ENCODE measurements at regions of chr15 and their contacts with region 1.

Region 1: DNA sequence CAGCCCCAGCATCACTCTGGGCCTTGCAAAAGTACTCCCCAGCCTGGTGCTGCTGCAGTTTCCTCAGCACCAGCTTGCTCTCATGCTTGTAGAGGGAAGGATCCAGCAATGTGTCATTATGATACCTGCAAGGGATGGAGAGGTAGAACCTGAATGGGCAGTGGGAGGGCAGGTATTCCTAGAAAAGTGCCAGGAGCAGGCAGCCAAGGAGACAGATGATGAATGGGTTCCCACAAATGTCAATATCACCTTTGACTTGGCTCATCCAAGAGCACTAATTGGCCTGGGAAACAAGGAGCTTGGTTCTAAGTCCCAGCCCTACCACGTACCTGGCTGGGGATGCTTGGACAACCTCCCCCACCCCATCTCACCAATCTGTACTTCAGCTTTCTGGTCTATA is 9.4 kb downstream of the CILP start:
- DNase-seq: no peak
- H3K4me3 Mint-ChIP-seq: no peak overlapping the region
- H3K27ac Mint-ChIP-seq: no peak overlapping the region
- H3K4me1 Mint-ChIP-seq: no peaks in the 10 kb centered on the region
- H3K27me3 Mint-ChIP-seq: peaks cover 26% of the 10 kb centered on the region

Region 2: DNA sequence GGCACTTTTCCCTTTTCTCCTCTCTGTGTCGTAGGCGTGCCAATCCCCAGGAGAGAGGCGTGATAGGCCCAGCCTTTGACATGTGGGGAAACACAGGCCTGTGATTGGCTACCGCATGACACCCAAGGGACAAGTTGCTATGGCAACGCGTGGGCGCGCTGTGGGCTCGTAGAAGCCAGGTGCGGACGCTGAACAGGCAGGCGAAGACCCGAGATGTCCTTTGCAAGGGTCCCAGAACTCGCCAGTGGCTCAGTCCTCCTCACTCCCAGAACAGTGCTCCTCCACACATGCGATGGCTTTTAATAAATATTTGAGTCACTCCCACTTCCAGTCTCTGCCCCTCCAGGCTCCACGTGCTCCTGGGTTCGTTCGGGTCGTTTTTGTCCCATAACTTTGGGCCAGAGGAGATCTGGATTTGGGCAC is 152.5 kb before region 1 on chr15:
- CTCF ChIA-PET with region 1: no interaction called
- DNase-seq: peak; percentile 92
- H3K4me3 Mint-ChIP-seq: peak overlapping the region; percentile 44
- H3K27ac Mint-ChIP-seq: no peak overlapping the region
- H3K4me1 Mint-ChIP-seq: peaks cover 13% of the 10 kb centered on the region
- H3K27me3 Mint-ChIP-seq: peaks cover 25% of the 10 kb centered on the region

Region 3: GRCh38 chr15:65212097-65212496 is 10.2 kb after region 1 on chr15:
- CTCF ChIA-PET with region 1: interaction called, 12 read pairs
- DNase-seq: peak; percentile 52
- H3K4me3 Mint-ChIP-seq: no peak overlapping the region
- H3K27ac Mint-ChIP-seq: no peak overlapping the region
- H3K4me1 Mint-ChIP-seq: no peaks in the 10 kb centered on the region
- H3K27me3 Mint-ChIP-seq: peaks cover 5% of the 10 kb centered on the region

Measured in activated naive CD4-positive, alpha-beta T cell treated with anti-CD3 and anti-CD28 coated beads, Interleukin-2, amount 10 ng/mL, durations not matched to agents 7 days and 5 days (primary cell).